ENCODE measurements at regions of chr6 and their contacts with region 1.

Region 1: GRCh38 chr6:135451693-135452092 is 45.8 kb downstream of the AHI1 start:
- DNase-seq: peak; percentile 67
- ATAC-seq: no peak
- H3K4me3 ChIP-seq: no peak overlapping the region
- H3K4me3 Mint-ChIP-seq: no peak overlapping the region
- H3K27ac ChIP-seq: no peak overlapping the region
- H3K27ac Mint-ChIP-seq: no peak overlapping the region
- H3K4me1 ChIP-seq: peaks cover 3 to 8% of the 10 kb centered on the region in 2 donors
- H3K4me1 Mint-ChIP-seq: peaks cover 9% of the 10 kb centered on the region
- H3K27me3 ChIP-seq: no peaks in the 10 kb centered on the region
- H3K27me3 Mint-ChIP-seq: no peaks in the 10 kb centered on the region
- CTCF ChIP-seq: peak; percentile 86

Region 2: DNA sequence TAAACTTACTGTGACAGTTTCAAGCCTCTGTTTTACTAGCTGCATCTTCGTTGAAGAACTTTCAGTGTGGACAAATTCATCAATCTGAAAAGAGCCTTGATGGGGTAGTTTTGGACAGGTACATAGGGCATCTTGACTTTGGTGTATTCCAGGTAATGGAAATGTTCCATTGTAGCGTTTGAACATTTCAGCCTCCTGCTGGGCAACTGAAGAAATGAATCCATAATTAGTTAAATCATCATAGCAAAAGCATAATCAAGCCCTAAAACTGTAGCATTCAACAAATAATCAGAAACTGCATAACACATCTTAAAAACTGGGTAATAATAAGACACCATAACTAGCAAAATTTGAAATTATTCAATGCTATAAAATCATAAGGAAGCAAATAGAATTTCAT is 40.4 kb before region 1 on chr6:
- CTCF ChIA-PET with region 1: no interaction called
- POLR2A ChIA-PET with region 1: no interaction called
- intact Hi-C with region 1: no loop called
- DNase-seq: no peak
- ATAC-seq: no peak
- H3K4me3 ChIP-seq: no peak overlapping the region
- H3K4me3 Mint-ChIP-seq: no peak overlapping the region
- H3K27ac ChIP-seq: no peak overlapping the region
- H3K27ac Mint-ChIP-seq: no peak overlapping the region
- H3K4me1 ChIP-seq: no peaks in the 10 kb centered on the region
- H3K4me1 Mint-ChIP-seq: no peaks in the 10 kb centered on the region
- H3K27me3 ChIP-seq: no peaks in the 10 kb centered on the region
- H3K27me3 Mint-ChIP-seq: no peaks in the 10 kb centered on the region
- CTCF ChIP-seq: no peak

Region 3: GRCh38 chr6:135497412-135498269 is 45.9 kb after region 1 on chr6 and contains the start of gene AHI1:
- CTCF ChIA-PET with region 1: interaction called, 5 read pairs
- POLR2A ChIA-PET with region 1: no interaction called
- intact Hi-C with region 1: loop called (anchors 5 kb)
- DNase-seq: peak; percentile 96
- ATAC-seq: peak; percentile 90
- H3K4me3 ChIP-seq: peak within 1 kb of the TSS; percentile 82 to 97 (median 93)
- H3K4me3 Mint-ChIP-seq: peak within 1 kb of the TSS; percentile 20
- H3K27ac ChIP-seq: peak within 1 kb of the TSS; percentile 93 to 99
- H3K27ac Mint-ChIP-seq: no peak within 1 kb of the TSS
- H3K4me1 ChIP-seq: peaks cover 10 to 12% of the 10 kb centered on the region in 2 donors
- H3K4me1 Mint-ChIP-seq: peaks cover 12% of the 10 kb centered on the region
- H3K27me3 ChIP-seq: no peaks in the 10 kb centered on the region
- H3K27me3 Mint-ChIP-seq: no peaks in the 10 kb centered on the region
- CTCF ChIP-seq: no peak
- total RNA-seq, gene AHI1: 57.9 and 61.7 TPM in 2 replicates

Region 4: GRCh38 chr6:135522965-135523692 is 71.4 kb after region 1 on chr6:
- CTCF ChIA-PET with region 1: no interaction called
- POLR2A ChIA-PET with region 1: no interaction called
- intact Hi-C with region 1: no loop called
- DNase-seq: no peak
- ATAC-seq: no peak
- H3K4me3 ChIP-seq: no peak overlapping the region
- H3K4me3 Mint-ChIP-seq: no peak overlapping the region
- H3K27ac ChIP-seq: no peak overlapping the region
- H3K27ac Mint-ChIP-seq: no peak overlapping the region
- H3K4me1 ChIP-seq: no peaks in the 10 kb centered on the region
- H3K4me1 Mint-ChIP-seq: no peaks in the 10 kb centered on the region
- H3K27me3 ChIP-seq: no peaks in the 10 kb centered on the region
- H3K27me3 Mint-ChIP-seq: no peaks in the 10 kb centered on the region
- CTCF ChIP-seq: no peak

Region 5: DNA sequence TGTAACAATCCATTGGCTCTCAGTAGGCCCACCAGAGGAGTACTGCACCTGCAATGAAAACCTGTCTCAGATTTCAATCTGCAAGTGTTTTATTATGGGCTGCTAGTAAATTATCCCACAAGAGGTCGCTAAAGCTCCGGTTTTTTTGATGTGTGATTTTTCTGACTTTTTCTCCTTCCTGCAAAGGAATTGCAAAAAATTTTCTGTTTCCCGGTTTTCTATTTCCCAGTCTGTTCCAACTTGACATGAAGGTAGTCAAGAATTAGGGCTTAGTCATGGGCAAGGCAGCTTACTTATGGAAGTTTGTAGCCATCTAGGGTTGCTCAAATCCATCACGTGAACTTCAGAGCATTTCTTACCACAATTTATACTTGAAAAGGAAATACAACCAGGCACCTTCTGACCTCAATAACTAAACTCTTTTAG is 84.3 kb after region 1 on chr6:
- CTCF ChIA-PET with region 1: interaction called, 18 read pairs
- POLR2A ChIA-PET with region 1: no interaction called
- intact Hi-C with region 1: loop called (anchors 1 kb)
- DNase-seq: peak; percentile 42
- ATAC-seq: no peak
- H3K4me3 ChIP-seq: no peak overlapping the region
- H3K4me3 Mint-ChIP-seq: no peak overlapping the region
- H3K27ac ChIP-seq: no peak overlapping the region
- H3K27ac Mint-ChIP-seq: no peak overlapping the region
- H3K4me1 ChIP-seq: no peaks in the 10 kb centered on the region
- H3K4me1 Mint-ChIP-seq: peaks cover 8% of the 10 kb centered on the region
- H3K27me3 ChIP-seq: no peaks in the 10 kb centered on the region
- H3K27me3 Mint-ChIP-seq: peaks cover 10% of the 10 kb centered on the region
- CTCF ChIP-seq: peak; percentile 74

Region 6: GRCh38 chr6:136226027-136226673 is 774.5 kb after region 1 on chr6:
- CTCF ChIA-PET with region 1: interaction called, 20 read pairs
- POLR2A ChIA-PET with region 1: no interaction called
- intact Hi-C with region 1: loop called (anchors 1 kb)
- DNase-seq: peak; percentile 79
- ATAC-seq: peak; percentile 97
- H3K4me3 ChIP-seq: peak overlapping the region in 3 of 5 experiments; percentile 25 to 49 (median 38)
- H3K4me3 Mint-ChIP-seq: peak overlapping the region; percentile 51
- H3K27ac ChIP-seq: no peak overlapping the region
- H3K27ac Mint-ChIP-seq: no peak overlapping the region
- H3K4me1 ChIP-seq: peaks cover 10 to 14% of the 10 kb centered on the region in 2 donors
- H3K4me1 Mint-ChIP-seq: peaks cover 12% of the 10 kb centered on the region
- H3K27me3 ChIP-seq: no peaks in the 10 kb centered on the region
- H3K27me3 Mint-ChIP-seq: peaks cover 3% of the 10 kb centered on the region
- CTCF ChIP-seq: peak; percentile 100